ENCODE measurements at regions of chr10 and their contacts with region 1.

Region 1: DNA sequence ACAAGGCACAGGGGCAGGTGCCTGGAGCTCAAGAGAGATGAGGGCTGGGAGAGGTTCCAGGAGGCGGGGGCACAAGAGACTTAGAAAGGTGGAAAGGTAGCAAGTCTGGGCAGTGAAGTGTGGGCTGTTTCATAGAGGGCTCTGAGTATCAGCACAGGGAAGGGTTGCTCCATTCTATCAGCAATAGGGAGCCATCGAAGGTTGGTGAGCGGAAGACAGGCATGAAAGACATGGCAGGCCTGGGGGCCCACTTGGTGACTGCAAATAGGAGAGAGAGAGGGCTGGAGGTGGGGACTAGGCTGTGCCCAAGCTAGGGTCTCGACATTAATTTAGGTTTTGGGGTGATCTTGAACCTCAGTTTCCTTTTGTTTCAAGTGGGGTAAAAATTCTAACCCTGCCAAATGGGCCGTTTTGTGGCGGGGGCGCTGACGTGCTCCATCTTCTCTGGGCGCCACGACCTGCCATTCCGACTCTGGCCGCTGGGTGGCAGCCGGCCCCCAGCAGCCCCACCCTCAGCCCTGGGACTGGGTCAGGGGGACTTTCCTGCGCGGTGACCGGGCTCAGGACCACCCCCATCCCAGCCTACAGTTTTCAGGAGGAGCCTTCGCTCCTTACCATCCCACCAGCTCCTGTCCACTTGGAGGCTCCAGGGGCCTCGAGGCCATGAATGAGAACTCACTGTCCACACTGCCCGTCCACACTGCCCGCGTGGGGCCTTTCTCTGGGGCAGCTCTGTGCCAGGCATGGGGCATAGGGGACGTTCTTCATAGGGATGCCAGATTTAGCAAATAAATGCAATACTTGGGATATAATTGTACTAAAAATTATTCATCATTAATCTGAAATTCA is 37.2 kb upstream of the PCBD1 start:
- DNase-seq: peak; percentile 23 to 90
- H3K4me3 ChIP-seq: no peak overlapping the region
- CTCF ChIP-seq: peak in 1 of 3 donors; percentile 81
- POLR2A ChIP-seq: no peak

Region 2: GRCh38 chr10:70461215-70461986 is 464.2 kb before region 1 on chr10:
- intact Hi-C with region 1: no loop called
- DNase-seq: no peak
- H3K4me3 ChIP-seq: no peak overlapping the region
- CTCF ChIP-seq: peak in 1 of 3 donors; percentile 31
- POLR2A ChIP-seq: no peak

Region 3: GRCh38 chr10:71209352-71209715 is 283.7 kb after region 1 on chr10:
- intact Hi-C with region 1: loop called (anchors 5 kb)
- DNase-seq: peak in 1 of 2 donors; percentile 61
- H3K4me3 ChIP-seq: no peak overlapping the region
- CTCF ChIP-seq: no peak
- POLR2A ChIP-seq: no peak